WTC11 (cell line): ENCODE measurements at regions of chr7 and their contacts with region 1.

Region 1: DNA sequence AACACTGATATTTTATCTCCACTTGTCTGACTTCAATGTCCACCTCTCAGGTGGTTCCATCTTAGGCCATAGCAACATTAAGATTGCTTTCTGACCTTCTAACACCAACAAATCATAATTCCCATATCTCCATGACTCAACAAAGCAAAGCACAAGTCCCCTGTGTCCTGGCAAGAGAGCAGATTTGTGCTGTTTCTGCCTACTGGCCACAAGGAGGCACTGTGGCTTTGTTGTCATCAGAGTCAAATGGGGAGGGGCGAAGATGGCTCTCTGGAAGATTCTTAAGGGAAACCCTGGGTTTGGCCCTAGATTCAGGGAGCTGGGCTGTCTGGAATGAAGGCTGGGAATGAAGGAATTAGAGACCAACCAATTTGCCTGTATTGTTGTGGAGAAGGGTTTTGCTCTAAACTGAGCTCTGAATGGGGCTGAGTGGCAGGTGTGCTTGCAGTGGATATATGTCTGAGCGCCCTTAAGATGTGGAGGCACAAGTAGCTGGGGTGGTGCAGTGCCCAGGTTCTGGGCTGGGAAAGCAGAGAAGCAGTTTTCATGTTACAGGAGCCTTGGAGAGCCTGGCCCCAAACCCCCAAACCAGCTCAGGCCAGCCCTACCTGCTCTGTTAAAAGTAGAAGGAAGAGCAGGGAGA is 154.8 kb upstream of the PRSS58 start:
- DNase-seq: peak; percentile 55
- ATAC-seq: peak; percentile 95
- H3K4me3 Mint-ChIP-seq: no peak overlapping the region
- H3K27ac Mint-ChIP-seq: no peak overlapping the region
- H3K4me1 Mint-ChIP-seq: peaks cover 14% of the 10 kb centered on the region
- H3K27me3 Mint-ChIP-seq: no peaks in the 10 kb centered on the region; the same call in 1 of the 2 replicates
- CTCF ChIP-seq: peak; percentile 77

Region 2: GRCh38 chr7:142313528-142313927 is 99.1 kb before region 1 on chr7:
- CTCF ChIA-PET with region 1: no interaction called
- POLR2A ChIA-PET with region 1: no interaction called
- DNase-seq: no peak
- ATAC-seq: no peak
- H3K4me3 Mint-ChIP-seq: no peak overlapping the region
- H3K27ac Mint-ChIP-seq: no peak overlapping the region
- H3K4me1 Mint-ChIP-seq: no peaks in the 10 kb centered on the region
- H3K27me3 Mint-ChIP-seq: peaks cover 6% of the 10 kb centered on the region
- CTCF ChIP-seq: no peak

Region 3: GRCh38 chr7:142365410-142365842 is 47.2 kb before region 1 on chr7:
- CTCF ChIA-PET with region 1: interaction called, 11 read pairs
- POLR2A ChIA-PET with region 1: interaction called, 3 read pairs
- DNase-seq: peak; percentile 64
- ATAC-seq: peak; percentile 97
- H3K4me3 Mint-ChIP-seq: peak overlapping the region; percentile 28; the same call in 1 of the 2 replicates
- H3K27ac Mint-ChIP-seq: peak overlapping the region; percentile 99
- H3K4me1 Mint-ChIP-seq: peaks cover 37% of the 10 kb centered on the region
- H3K27me3 Mint-ChIP-seq: peaks cover 45% of the 10 kb centered on the region
- CTCF ChIP-seq: no peak

Region 4: GRCh38 chr7:142401951-142402350 is 10.7 kb before region 1 on chr7:
- CTCF ChIA-PET with region 1: interaction called, 10 read pairs
- POLR2A ChIA-PET with region 1: no interaction called
- DNase-seq: no peak
- ATAC-seq: no peak
- H3K4me3 Mint-ChIP-seq: no peak overlapping the region
- H3K27ac Mint-ChIP-seq: no peak overlapping the region
- H3K4me1 Mint-ChIP-seq: no peaks in the 10 kb centered on the region
- H3K27me3 Mint-ChIP-seq: no peaks in the 10 kb centered on the region; the same call in 1 of the 2 replicates
- CTCF ChIP-seq: no peak